Gastrocnemius medialis (tissue), 4 donors: ENCODE measurements at regions of chr14 and their contacts with region 1.

Region 1: DNA sequence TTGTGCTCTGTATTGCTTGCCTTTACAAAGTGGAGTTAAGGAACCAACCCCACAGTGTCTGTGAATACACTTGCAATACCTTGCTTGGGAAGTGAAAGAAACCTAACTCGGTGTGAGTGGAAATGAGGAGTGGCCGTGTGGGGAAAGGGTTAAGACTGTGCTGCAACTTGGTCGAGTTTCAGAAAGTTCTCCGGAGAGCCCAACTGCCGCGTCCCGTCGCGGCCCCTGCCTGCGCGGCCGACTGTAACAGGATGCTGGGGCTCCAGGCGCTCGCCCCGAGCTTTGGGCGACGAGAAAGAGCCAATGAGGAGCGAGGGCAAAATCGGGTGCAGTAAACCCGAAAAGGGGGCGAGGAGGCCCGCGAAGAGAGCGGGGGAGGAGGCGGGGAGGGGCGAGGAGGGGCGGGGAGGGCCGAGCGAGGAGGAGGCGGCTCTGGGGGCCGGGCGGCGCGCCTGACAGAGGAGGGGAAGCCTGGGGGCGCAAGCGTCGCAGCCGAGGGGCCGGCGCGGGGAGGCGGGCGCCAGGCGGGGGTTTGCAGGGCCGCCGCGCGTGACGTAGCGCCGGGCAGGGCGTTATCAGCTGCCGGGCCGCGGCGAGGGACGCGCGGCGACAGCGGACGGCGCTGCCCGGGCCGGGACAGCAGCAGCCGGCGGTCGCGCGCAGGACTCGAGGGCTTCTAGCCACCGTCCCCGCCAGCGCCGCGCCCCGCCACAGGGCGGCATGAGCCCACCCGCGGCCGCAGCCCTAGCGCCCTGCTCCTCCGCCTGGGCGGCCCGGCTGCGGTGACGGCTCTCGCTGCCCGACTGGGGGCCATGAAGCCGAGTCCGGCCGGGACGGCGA is at the start of gene DACT1:
- DNase-seq: peak in 1 of 2 donors; percentile 16
- ATAC-seq: peak; percentile 44 to 54
- H3K4me3 ChIP-seq: peak within 1 kb of the TSS; percentile 57 to 76 (median 62)
- H3K27ac ChIP-seq: peak within 1 kb of the TSS; percentile 35 to 69 (median 56)
- H3K4me1 ChIP-seq: peaks cover 17 to 18% of the 10 kb centered on the region in 2 donors
- H3K27me3 ChIP-seq: no peaks in the 10 kb centered on the region
- CTCF ChIP-seq: peak in 1 of 5 experiments; percentile 18
- POLR2A ChIP-seq: peak; percentile 11 to 25
- total RNA-seq, gene DACT1: 0.97 to 3.0 (median 1.8) TPM

Region 2: GRCh38 chr14:58280954-58281787 is 356.4 kb before region 1 on chr14:
- in situ Hi-C with region 1: no loop called
- intact Hi-C with region 1: no loop called
- DNase-seq: no peak
- ATAC-seq: peak; percentile 34 to 69
- H3K4me3 ChIP-seq: no peak overlapping the region
- H3K27ac ChIP-seq: peak overlapping the region; percentile 67 to 75 (median 70)
- H3K4me1 ChIP-seq: peaks cover 36 to 42% of the 10 kb centered on the region in 2 donors
- H3K27me3 ChIP-seq: no peaks in the 10 kb centered on the region
- CTCF ChIP-seq: no peak
- POLR2A ChIP-seq: no peak

Region 3: GRCh38 chr14:58626431-58626831 is 11.2 kb before region 1 on chr14:
- in situ Hi-C with region 1: no loop called
- intact Hi-C with region 1: no loop called
- DNase-seq: no peak
- ATAC-seq: no peak
- H3K4me3 ChIP-seq: no peak overlapping the region
- H3K27ac ChIP-seq: no peak overlapping the region
- H3K4me1 ChIP-seq: no peaks in the 10 kb centered on the region
- H3K27me3 ChIP-seq: no peaks in the 10 kb centered on the region
- CTCF ChIP-seq: no peak
- POLR2A ChIP-seq: no peak

Region 4: DNA sequence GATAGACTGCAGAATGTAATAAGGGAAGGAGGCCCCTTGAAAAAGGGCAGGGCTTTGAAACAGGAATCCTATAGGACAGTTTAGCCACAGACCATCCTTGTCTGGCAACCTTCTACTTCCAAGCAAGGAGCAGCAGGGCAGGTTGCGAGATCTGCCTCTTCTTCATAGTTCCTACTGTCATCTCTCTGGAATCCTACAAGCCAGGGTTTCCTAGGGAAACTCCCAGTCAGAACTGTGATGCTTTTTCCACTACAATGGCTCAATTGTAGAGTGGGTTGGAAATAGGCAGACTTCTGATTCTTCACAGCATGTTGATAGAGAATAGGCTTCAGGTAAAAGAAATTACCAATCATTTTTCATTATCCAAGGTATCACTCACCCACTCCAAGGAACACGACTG is 186.5 kb after region 1 on chr14:
- in situ Hi-C with region 1: no loop called
- intact Hi-C with region 1: loop called (anchors 5 kb)
- DNase-seq: no peak
- ATAC-seq: no peak
- H3K4me3 ChIP-seq: no peak overlapping the region
- H3K27ac ChIP-seq: no peak overlapping the region
- H3K4me1 ChIP-seq: peaks cover 9 to 17% of the 10 kb centered on the region in 2 donors
- H3K27me3 ChIP-seq: no peaks in the 10 kb centered on the region
- CTCF ChIP-seq: no peak
- POLR2A ChIP-seq: no peak

Region 5: DNA sequence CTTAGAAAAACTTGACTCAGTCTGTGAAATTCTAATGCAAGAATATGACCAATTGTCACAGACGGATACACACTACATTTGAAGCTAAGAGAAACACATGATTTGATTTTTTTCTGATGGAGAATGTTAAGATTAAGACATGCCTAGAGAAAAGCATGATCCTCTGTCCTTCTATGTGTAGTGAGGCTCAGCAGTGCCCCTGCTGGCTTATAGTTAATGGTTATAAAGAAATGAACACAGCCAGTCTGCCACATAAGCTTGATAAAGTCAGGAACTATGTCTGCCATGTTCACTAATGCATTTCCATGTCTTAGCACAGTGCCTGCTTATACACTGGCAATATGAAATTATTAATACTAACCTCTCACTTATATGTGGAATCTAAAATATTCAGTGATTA is 382.8 kb after region 1 on chr14:
- in situ Hi-C with region 1: loop called in 2 of 4 experiments (anchors 25 kb)
- intact Hi-C with region 1: loop called (anchors 10 kb)
- DNase-seq: no peak
- ATAC-seq: no peak
- H3K4me3 ChIP-seq: no peak overlapping the region
- H3K27ac ChIP-seq: no peak overlapping the region
- H3K4me1 ChIP-seq: no peaks in the 10 kb centered on the region
- H3K27me3 ChIP-seq: no peaks in the 10 kb centered on the region
- CTCF ChIP-seq: no peak
- POLR2A ChIP-seq: no peak

Region 6: GRCh38 chr14:59028476-59029202 is 391.0 kb after region 1 on chr14:
- in situ Hi-C with region 1: loop called in 2 of 4 experiments (anchors 25 kb)
- intact Hi-C with region 1: loop called (anchors 10 kb)
- DNase-seq: peak in 1 of 2 donors; percentile 10
- ATAC-seq: peak in 1 of 2 donors; percentile 56
- H3K4me3 ChIP-seq: no peak overlapping the region
- H3K27ac ChIP-seq: no peak overlapping the region
- H3K4me1 ChIP-seq: peaks cover 0 to 4% of the 10 kb centered on the region in 2 donors
- H3K27me3 ChIP-seq: no peaks in the 10 kb centered on the region
- CTCF ChIP-seq: peak; percentile 6 to 66 (median 45)
- POLR2A ChIP-seq: no peak

Region 7: GRCh38 chr14:59055439-59056045 is 417.9 kb after region 1 on chr14:
- in situ Hi-C with region 1: no loop called
- intact Hi-C with region 1: loop called (anchors 2 kb)
- DNase-seq: no peak
- ATAC-seq: no peak
- H3K4me3 ChIP-seq: no peak overlapping the region
- H3K27ac ChIP-seq: no peak overlapping the region
- H3K4me1 ChIP-seq: no peaks in the 10 kb centered on the region
- H3K27me3 ChIP-seq: no peaks in the 10 kb centered on the region
- CTCF ChIP-seq: peak in 4 of 5 experiments; percentile 21 to 70 (median 50)
- POLR2A ChIP-seq: no peak